ENCODE measurements at regions of chr6 and their contacts with region 1.

Region 1: GRCh38 chr6:154675602-154676088 is 57.6 kb upstream of the SCAF8 start:
- DNase-seq: peak; percentile 95
- ATAC-seq: peak; percentile 100
- H3K4me3 Mint-ChIP-seq: no peak overlapping the region
- H3K27ac Mint-ChIP-seq: no peak overlapping the region
- H3K4me1 Mint-ChIP-seq: no peaks in the 10 kb centered on the region
- H3K27me3 Mint-ChIP-seq: no peaks in the 10 kb centered on the region
- CTCF ChIP-seq: peak; percentile 99

Region 2: DNA sequence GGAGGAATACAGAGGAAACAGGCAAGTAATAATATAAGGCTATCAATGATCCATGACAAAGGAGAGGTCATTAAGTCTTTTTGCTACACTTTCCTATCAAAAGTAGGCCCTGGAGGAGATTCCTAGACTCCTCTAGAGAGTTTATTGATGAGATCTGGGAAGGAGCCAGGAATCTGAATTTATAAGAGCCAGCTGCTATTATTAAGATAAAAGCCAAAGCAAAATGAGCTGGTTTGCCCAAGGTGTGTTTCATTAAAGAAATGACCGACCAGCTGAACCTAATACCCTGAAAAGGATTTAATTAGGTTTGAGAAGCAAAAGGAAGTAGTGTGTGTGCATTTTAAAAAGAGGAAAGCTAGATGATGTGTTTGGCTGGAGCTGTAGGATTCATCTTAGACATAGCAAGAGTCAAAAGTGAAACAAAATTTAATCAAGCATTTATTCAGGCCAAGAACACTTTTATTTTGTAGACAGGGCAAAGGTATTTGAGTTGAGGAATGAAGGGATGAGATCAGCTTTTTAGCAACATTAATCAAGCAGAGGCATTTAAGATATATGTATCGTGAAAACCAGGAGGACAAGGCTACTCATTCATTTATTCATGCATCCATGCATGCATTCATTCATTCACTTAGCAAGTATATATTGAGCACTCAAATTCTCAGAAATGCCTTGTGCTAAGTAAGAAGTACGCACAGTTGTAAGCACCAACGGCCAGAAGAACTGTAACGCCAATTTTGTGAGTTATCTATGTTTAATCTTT is 14.0 kb after region 1 on chr6:
- CTCF ChIA-PET with region 1: interaction called, 32 read pairs
- POLR2A ChIA-PET with region 1: no interaction called
- intact Hi-C with region 1: no loop called
- DNase-seq: no peak
- ATAC-seq: no peak
- H3K4me3 Mint-ChIP-seq: no peak overlapping the region
- H3K27ac Mint-ChIP-seq: no peak overlapping the region
- H3K4me1 Mint-ChIP-seq: no peaks in the 10 kb centered on the region
- H3K27me3 Mint-ChIP-seq: no peaks in the 10 kb centered on the region
- CTCF ChIP-seq: no peak

Region 3: DNA sequence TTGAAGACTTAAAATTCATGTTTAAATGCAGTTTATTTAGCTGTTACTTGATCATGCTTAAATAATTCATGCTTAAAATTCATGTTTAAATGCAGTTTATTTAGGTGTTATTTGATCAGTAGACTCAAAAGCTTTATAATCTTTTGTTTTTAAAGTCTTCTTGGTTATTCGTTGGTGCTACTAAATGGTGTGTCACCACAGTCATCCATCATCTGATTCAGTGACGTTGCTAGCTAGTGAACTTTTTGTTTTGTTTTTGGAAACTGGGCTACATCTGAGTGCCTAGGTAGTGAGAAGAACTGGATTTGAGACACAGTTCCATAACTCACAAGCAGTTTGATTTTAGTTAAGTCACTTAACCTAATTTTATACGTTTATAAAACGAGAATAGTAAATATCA is 78.5 kb after region 1 on chr6:
- CTCF ChIA-PET with region 1: interaction called, 11 read pairs
- POLR2A ChIA-PET with region 1: no interaction called
- intact Hi-C with region 1: no loop called
- DNase-seq: no peak
- ATAC-seq: peak; percentile 39
- H3K4me3 Mint-ChIP-seq: no peak overlapping the region
- H3K27ac Mint-ChIP-seq: peak overlapping the region; percentile 30
- H3K4me1 Mint-ChIP-seq: peaks cover 71% of the 10 kb centered on the region
- H3K27me3 Mint-ChIP-seq: no peaks in the 10 kb centered on the region
- CTCF ChIP-seq: no peak

Region 4: DNA sequence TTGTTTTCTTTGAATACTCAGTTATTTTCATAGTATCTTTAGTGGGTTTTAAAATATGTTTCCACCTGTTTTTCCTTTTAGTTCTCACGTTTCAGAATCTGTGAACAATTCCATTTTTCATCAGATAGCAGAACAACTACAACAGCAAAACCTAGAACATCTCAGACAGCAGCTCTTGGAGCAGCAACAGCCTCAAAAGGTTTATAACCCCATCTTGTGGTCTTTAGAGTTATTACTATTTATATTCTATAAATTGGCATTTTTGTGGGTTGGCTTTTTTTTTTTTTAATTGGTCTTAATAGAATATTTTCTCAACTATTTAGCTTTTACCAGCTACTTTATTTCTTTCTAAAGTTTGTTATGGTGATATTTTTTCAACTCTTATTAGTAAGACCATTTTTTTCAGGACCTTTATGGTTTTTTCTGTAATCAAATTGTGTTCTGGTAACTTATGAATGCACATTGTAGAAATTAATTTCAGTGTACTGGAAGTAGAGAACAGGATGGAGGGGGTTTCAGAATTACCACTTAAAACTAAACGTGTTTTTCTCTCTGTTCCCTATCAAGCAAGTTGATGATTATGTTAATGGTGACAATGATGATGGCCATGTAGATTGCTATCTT is 129.8 kb after region 1 on chr6:
- CTCF ChIA-PET with region 1: interaction called, 233 read pairs
- POLR2A ChIA-PET with region 1: interaction called, 3 read pairs
- intact Hi-C with region 1: loop called (anchors 1 kb)
- DNase-seq: no peak
- ATAC-seq: no peak
- H3K4me3 Mint-ChIP-seq: no peak overlapping the region
- H3K27ac Mint-ChIP-seq: no peak overlapping the region
- H3K4me1 Mint-ChIP-seq: peaks cover 5% of the 10 kb centered on the region
- H3K27me3 Mint-ChIP-seq: no peaks in the 10 kb centered on the region
- CTCF ChIP-seq: peak; percentile 58

Region 5: DNA sequence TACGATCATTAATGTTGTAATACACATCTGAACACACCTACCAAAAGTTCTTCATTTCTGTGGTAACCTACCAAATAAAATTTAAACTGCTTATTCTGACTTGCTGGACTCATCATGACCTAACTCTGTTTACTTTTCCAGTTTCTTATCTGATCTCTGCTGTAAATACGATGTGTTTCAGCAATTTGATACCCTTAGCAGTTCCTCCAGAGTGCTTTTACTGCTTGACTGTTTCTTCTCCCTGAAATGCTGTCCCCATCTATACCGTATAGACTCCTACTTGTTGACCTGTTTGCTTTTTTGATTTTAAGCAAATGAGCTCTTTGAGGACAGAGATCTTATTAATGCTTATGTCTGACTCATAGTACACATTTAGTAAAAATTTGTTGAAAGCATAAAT is 177.0 kb after region 1 on chr6:
- CTCF ChIA-PET with region 1: interaction called, 11 read pairs
- POLR2A ChIA-PET with region 1: no interaction called
- intact Hi-C with region 1: no loop called
- DNase-seq: no peak
- ATAC-seq: no peak
- H3K4me3 Mint-ChIP-seq: no peak overlapping the region
- H3K27ac Mint-ChIP-seq: no peak overlapping the region
- H3K4me1 Mint-ChIP-seq: peaks cover 17% of the 10 kb centered on the region
- H3K27me3 Mint-ChIP-seq: no peaks in the 10 kb centered on the region
- CTCF ChIP-seq: no peak

Region 6: GRCh38 chr6:154928325-154928922 is 252.8 kb after region 1 on chr6:
- CTCF ChIA-PET with region 1: interaction called, 30 read pairs
- POLR2A ChIA-PET with region 1: interaction called, 3 read pairs
- intact Hi-C with region 1: loop called (anchors 10 kb)
- DNase-seq: peak; percentile 84
- ATAC-seq: peak; percentile 77
- H3K4me3 Mint-ChIP-seq: no peak overlapping the region
- H3K27ac Mint-ChIP-seq: no peak overlapping the region
- H3K4me1 Mint-ChIP-seq: peaks cover 5% of the 10 kb centered on the region
- H3K27me3 Mint-ChIP-seq: no peaks in the 10 kb centered on the region
- CTCF ChIP-seq: peak; percentile 87

Region 7: GRCh38 chr6:154942775-154943174 is 267.1 kb after region 1 on chr6:
- CTCF ChIA-PET with region 1: no interaction called
- POLR2A ChIA-PET with region 1: no interaction called
- intact Hi-C with region 1: no loop called
- DNase-seq: no peak
- ATAC-seq: no peak
- H3K4me3 Mint-ChIP-seq: no peak overlapping the region
- H3K27ac Mint-ChIP-seq: no peak overlapping the region
- H3K4me1 Mint-ChIP-seq: no peaks in the 10 kb centered on the region
- H3K27me3 Mint-ChIP-seq: no peaks in the 10 kb centered on the region
- CTCF ChIP-seq: no peak

Measured in activated CD8-positive, alpha-beta T cell treated with anti-CD3 and anti-CD28 coated beads for 36 hours (primary cell).